ENCODE measurements at regions of chr7 and their contacts with region 1.

Region 1: DNA sequence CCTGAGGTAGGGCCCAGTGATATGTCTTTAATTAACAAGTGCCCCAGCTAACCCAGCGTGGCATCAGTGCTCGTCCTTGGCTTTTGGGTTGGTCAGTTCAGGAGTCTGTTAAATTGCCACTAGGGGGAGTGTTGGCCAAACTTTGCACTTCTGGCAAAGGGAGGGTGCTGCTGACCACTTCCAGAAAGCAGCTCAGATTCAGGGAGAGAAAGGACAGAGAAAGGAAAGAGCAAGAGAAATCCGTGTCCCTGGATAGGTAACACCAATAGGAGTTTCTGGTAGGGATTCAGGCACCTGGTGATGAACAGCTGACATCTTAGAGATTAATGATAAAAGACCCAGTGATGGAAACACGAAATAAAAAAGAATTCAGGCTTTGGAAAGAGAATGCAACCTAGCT is 243.1 kb upstream of the AOAH start:
- DNase-seq: peak; percentile 49 to 69
- ATAC-seq: peak; percentile 94 to 100
- H3K4me3 ChIP-seq: no peak overlapping the region
- H3K27ac ChIP-seq: no peak overlapping the region
- H3K4me1 ChIP-seq: peaks cover 10% of the 10 kb centered on the region
- CTCF ChIP-seq: peak; percentile 72
- EP300 ChIP-seq: no peak
- POLR2A ChIP-seq: no peak
- RAD21 ChIP-seq: peak; percentile 72 to 88

Region 2: DNA sequence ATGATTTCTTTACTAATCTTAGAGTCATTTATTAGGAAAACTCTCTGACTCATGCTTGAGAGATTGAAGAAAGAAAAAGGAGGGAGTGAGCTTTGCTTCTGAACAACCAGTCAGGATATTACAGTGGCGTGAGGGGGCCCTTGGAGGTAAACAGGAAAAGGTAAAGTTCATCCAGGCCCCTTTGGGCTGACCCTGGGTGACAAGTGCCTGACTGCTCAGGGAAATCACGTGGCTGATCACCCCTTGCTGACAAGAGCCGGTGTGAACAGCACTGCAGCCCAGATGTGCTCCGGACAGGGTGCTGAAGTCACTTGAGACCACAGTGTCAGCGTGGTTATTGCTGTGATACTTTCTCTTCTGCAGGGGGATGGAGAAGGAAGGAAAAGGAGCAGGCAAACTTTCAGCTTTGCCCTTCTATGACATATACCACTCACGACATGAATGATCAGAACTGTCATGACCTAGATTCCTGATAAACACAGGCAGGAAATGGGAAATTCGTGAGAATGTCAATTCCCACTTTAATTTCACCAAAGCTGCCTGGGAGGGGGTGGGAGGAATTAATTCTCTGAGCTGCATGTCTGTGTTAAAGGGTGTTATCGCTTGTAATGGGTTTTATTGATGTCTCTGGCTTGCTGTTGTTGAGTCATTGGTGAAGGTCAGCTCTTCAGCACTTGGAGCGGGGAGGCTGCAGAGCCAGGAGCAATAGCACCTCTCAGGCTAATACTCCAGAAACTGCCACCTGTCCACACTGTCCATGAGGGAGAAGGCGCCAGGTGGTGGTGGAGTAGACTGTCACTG is 103.3 kb before region 1 on chr7:
- CTCF ChIA-PET with region 1: no interaction called
- POLR2A ChIA-PET with region 1: no interaction called
- DNase-seq: no peak
- ATAC-seq: no peak
- H3K4me3 ChIP-seq: no peak overlapping the region
- H3K27ac ChIP-seq: no peak overlapping the region
- H3K4me1 ChIP-seq: no peaks in the 10 kb centered on the region
- CTCF ChIP-seq: no peak
- EP300 ChIP-seq: no peak
- POLR2A ChIP-seq: no peak
- RAD21 ChIP-seq: no peak

Region 3: DNA sequence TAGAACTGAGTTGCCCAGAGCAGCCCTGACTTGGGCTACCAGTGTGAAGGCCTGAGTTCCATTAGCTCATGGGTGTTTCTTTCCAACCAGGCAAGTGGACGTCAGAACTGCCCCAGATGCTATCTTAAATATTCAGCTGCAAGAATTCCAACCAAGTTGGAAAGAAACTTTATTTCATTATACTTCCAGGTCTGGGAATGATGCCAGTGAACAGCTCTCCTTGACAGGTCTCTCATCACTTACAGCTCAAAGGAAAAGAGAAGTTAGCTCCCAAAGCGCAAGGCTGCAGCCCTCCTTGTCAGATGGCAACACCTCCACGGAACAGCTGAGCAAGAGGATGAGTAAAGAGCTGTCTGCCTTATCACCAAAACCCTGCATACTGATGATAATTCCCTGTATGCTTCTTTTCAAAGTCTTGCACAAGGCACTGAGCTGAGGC is 12.4 kb after region 1 on chr7:
- CTCF ChIA-PET with region 1: interaction called, 21 read pairs
- POLR2A ChIA-PET with region 1: no interaction called
- DNase-seq: no peak
- ATAC-seq: no peak
- H3K4me3 ChIP-seq: no peak overlapping the region
- H3K27ac ChIP-seq: no peak overlapping the region
- H3K4me1 ChIP-seq: no peaks in the 10 kb centered on the region
- CTCF ChIP-seq: no peak
- EP300 ChIP-seq: no peak
- POLR2A ChIP-seq: no peak
- RAD21 ChIP-seq: no peak

Region 4: DNA sequence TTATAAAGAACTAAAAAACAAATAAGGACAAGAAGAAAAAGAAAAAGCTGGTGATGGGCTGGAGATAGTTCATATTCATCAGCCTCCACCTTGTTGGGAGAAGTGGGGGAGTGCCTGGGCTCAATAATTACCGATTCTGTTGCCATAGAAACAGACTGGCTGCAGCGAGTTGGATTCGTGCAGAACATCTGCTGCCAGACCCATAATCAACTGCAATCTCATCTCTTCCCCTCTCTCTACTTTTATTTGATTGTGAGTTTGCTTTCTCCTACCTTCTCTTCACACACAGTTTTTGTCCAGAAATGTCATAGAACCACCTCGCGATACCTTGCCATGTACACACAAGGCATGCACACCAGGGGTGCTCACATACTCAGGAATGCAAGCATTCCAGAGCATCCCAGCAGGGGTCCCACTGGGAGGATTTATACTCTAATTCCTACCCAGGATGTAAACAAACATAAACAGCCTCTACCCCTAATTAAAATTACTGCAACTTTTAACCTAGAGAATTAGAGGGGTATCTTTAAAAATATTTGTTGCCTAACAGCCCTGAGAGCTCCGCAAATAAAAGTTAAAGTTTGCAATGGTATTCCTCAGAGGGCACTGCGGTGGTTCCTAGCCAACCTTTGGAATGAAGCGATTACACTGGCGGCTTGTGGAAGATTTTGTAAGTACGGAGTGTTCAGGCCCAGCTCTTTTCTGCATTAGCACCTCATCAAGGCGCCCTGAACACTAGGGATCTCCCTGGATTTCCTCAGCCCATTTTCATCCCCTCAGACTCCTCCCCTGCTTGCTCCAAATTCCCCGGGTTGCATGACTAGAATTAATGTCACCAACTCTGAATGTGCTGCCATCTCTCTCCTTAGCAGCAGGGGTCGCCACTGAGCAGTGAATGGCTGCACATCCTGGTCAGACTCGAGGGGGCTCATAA is 19.3 kb after region 1 on chr7:
- CTCF ChIA-PET with region 1: interaction called, 21 read pairs
- POLR2A ChIA-PET with region 1: no interaction called
- DNase-seq: peak; percentile 57 to 75
- ATAC-seq: peak; percentile 78 to 90
- H3K4me3 ChIP-seq: no peak overlapping the region
- H3K27ac ChIP-seq: no peak overlapping the region
- H3K4me1 ChIP-seq: no peaks in the 10 kb centered on the region
- CTCF ChIP-seq: peak; percentile 68
- EP300 ChIP-seq: no peak
- POLR2A ChIP-seq: no peak
- RAD21 ChIP-seq: peak; percentile 72 to 82

Region 5: GRCh38 chr7:37173670-37174069 is 206.3 kb after region 1 on chr7:
- CTCF ChIA-PET with region 1: interaction called, 114 read pairs
- POLR2A ChIA-PET with region 1: no interaction called
- DNase-seq: no peak
- ATAC-seq: no peak
- H3K4me3 ChIP-seq: no peak overlapping the region
- H3K27ac ChIP-seq: no peak overlapping the region
- H3K4me1 ChIP-seq: no peaks in the 10 kb centered on the region
- CTCF ChIP-seq: no peak
- EP300 ChIP-seq: no peak
- POLR2A ChIP-seq: no peak
- RAD21 ChIP-seq: no peak

Region 6: DNA sequence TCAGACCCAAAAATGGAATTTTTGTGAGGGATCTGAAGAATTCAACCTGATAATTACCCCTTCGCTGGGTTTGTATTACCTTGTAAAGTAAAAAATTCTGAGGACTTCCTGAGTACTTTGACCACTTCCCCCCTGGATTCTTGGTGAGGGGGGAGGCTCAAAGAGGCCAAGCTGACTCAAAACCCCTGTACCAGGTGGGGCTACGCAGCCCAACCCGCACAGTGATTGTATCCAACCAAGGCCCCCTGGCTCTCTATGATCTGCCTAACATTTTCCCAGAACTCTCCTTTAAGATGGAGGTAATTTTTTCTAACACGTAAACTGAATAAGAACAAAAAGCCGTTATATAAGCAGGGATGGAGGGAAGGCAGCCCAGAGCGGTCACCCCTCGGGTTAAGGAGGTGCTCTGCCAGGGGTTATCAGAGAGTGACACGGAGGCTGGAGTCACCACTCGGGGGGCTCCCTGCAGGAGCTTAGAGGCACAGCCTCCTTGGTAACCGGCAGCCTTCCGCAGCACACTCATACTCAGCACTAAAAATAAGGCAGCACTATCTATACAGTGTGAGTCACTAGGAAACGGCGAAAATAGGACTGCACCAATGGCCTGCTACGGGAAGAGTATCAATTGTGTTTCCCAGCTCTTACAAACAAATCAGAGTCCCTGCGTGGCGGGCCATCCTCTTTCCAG is 225.8 kb after region 1 on chr7:
- CTCF ChIA-PET with region 1: interaction called, 11 read pairs
- POLR2A ChIA-PET with region 1: no interaction called
- DNase-seq: no peak
- ATAC-seq: no peak
- H3K4me3 ChIP-seq: no peak overlapping the region
- H3K27ac ChIP-seq: no peak overlapping the region
- H3K4me1 ChIP-seq: no peaks in the 10 kb centered on the region
- CTCF ChIP-seq: no peak
- EP300 ChIP-seq: no peak
- POLR2A ChIP-seq: no peak
- RAD21 ChIP-seq: no peak

Measured in A549 (cell line).